ENCODE measurements at regions of chr5 and their contacts with region 1.

Region 1: GRCh38 chr5:96601811-96602244 is 60.3 kb upstream of the CAST start:
- DNase-seq: peak; percentile 64
- CTCF ChIP-seq: peak; percentile 66

Region 2: GRCh38 chr5:95858661-95859326 is 743.0 kb before region 1 on chr5:
- in situ Hi-C with region 1: loop called (anchors 10 kb)
- DNase-seq: peak; percentile 90
- CTCF ChIP-seq: peak; percentile 90

Region 3: GRCh38 chr5:96344678-96345577 is 256.9 kb before region 1 on chr5:
- in situ Hi-C with region 1: loop called (anchors 10 kb)
- DNase-seq: peak; percentile 25
- CTCF ChIP-seq: peak; percentile 19

Region 4: DNA sequence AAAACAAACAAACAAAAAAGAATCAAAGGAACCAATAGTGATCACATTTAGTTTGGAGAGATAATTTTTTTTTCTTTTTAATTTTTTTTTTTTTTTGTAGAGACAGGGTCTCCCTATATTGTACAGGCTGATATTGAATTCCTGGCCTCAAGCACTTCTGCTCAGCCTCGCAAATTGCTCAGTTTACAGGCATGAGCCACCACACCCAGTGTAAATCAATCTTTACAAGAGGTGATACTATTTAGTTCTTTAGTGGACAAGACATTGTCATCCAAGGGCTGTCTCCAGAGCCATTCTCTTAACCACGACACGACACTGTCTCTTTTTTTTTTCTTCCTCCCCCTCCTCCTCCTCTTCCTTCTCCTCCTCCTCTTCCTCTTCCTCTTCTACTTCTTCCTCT is 304.0 kb after region 1 on chr5:
- in situ Hi-C with region 1: no loop called
- DNase-seq: no peak
- CTCF ChIP-seq: no peak

Region 5: GRCh38 chr5:97162045-97162444 is 560.2 kb after region 1 on chr5:
- in situ Hi-C with region 1: loop called (anchors 25 kb)
- DNase-seq: peak; percentile 22
- CTCF ChIP-seq: peak; percentile 80

Region 6: DNA sequence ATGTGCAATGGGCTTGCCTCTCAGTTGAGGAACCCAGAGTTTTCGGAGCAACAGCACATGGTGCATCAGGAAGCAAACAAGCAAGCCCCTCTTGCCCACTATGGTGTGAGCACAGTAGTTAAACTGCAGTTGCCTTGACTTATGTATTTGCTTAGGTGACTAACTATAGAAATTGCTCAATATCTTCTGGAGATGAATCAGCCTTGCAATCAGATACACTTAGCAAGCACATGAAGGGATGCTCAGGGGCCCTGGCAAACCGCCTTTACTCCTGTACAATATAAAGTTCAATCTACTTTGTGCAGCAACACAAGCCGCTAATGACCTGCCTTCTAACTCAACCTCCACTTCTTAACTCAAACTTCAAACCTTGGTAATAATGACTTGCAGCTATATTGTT is 1162.9 kb after region 1 on chr5:
- in situ Hi-C with region 1: no loop called
- DNase-seq: no peak
- CTCF ChIP-seq: no peak